GM12878 (cell line): ENCODE measurements at regions of chr9 and their contacts with region 1.

Region 1: GRCh38 chr9:136777359-136777758 is 13.0 kb upstream of the LCN15 start:
- DNase-seq: no peak
- ATAC-seq: no peak
- H3K4me3 ChIP-seq: no peak overlapping the region
- H3K27ac ChIP-seq: no peak overlapping the region
- H3K4me1 ChIP-seq: no peaks in the 10 kb centered on the region
- H3K27me3 ChIP-seq: peaks cover 0 to 1% of the 10 kb centered on the region in 2 experiments; a peak in 1 of 4 replicates
- CTCF ChIP-seq: no peak
- EP300 ChIP-seq: no peak
- POLR2A ChIP-seq: no peak
- RAD21 ChIP-seq: no peak

Region 2: DNA sequence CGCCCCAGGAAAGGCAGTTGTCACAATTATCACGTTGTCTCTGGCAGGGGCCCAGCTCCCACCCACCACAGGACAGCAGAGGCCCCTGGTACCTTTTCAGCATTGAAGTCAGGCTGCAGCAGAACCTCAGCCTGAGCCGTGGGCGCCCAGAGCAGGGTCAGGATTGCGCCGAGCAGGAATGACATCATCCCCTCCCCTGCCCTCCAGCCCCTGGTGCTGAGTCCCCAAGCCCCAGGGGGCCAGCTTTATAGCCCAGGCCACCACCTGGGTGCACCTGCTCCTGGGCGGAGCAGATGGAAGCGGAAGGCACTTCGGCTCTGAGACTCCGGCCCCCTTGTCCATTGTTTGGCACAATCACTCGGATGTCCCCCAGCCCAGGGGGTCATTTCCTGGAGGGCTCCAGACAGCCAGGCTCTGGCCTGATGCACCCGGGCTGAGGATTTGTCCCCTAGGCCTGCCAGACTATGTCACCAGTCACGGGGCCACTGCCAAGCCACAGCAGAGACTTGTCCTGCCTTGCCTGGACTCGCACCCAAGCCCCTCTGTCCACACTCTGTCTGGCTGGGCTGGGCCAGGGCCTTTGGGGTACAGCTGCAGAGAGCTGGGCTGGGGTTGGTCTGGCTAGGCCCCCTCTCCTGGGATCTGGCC is 12.9 kb before region 1 on chr9 and contains the start of gene LCN15:
- CTCF ChIA-PET with region 1: interaction called, 163 read pairs
- POLR2A ChIA-PET with region 1: interaction called, 5 read pairs
- RAD21 ChIA-PET with region 1: interaction called, 9 read pairs
- SMC1A ChIA-PET with region 1: interaction called, 21 read pairs
- in situ Hi-C with region 1: no loop called
- intact Hi-C with region 1: no loop called
- DNase-seq: no peak
- ATAC-seq: no peak
- H3K4me3 ChIP-seq: no peak within 1 kb of the TSS; the same call in 1 of the 2 replicates
- H3K27ac ChIP-seq: peak within 1 kb of the TSS; percentile 79
- H3K4me1 ChIP-seq: peaks cover 26% of the 10 kb centered on the region
- H3K27me3 ChIP-seq: no peaks in the 10 kb centered on the region; a peak in 1 of 4 replicates
- CTCF ChIP-seq: no peak
- EP300 ChIP-seq: no peak
- POLR2A ChIP-seq: no peak
- RAD21 ChIP-seq: no peak
- polyA plus RNA-seq, gene LCN15: not detected